ENCODE measurements at regions of chr6 and their contacts with region 1.

Region 1: DNA sequence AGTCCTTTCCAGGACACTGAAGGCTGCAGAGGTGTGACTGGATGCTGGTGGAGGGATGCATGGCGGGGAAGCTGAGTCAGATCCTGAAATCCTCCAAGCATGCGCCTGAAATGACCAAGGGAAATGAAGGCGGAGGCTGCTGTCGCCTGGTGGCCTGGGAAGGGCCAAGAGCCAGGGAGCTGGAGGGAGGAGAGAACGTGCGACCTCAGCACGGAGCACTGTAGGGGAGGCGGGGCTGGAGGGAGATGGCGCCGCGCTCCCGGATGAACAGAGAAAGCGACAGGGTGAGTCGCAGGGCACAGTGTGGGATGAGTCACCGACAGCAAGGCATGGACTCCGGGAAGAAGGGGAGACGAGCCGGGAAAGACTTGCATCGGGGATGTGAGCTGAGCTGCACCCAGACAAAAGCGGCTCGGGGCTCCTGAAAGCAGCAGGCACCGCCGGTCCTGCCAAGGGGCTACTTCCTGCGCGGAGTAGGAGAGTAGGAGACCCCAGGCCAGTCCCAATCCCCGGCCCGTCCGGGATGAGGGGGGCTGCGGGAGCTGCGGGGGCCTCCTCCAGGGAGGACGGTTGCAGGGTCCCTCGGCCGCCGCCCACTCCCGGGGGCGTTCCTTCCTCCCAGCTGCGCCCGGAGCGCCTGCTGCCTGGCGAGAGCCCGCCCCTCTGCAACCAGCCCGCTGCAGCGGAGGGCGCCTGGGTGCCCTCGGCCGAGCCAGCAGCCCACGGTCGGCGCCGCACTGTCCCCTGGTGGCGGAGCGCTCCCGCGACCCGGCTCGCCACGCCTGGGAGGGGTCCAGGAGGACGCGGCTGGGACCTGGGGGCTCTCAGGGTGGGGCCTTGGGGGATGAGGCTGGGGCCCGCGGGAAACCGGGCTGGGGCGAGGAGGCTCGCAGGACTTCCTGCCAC is 11.0 kb upstream of the NQO2 start:
- DNase-seq: peak; percentile 76 to 78 (median 77)
- H3K4me3 ChIP-seq: peak overlapping the region; percentile 52 to 66
- H3K4me3 Mint-ChIP-seq: peak overlapping the region; percentile 92 to 98 (median 98)
- H3K27ac ChIP-seq: peak overlapping the region; percentile 92
- H3K27ac Mint-ChIP-seq: peak overlapping the region; percentile 99 to 100 (median 100)
- H3K4me1 ChIP-seq: peaks cover 26% of the 10 kb centered on the region
- H3K4me1 Mint-ChIP-seq: peaks cover 19 to 37% (median 27%) of the 10 kb centered on the region in 4 donors
- H3K27me3 ChIP-seq: no peaks in the 10 kb centered on the region
- H3K27me3 Mint-ChIP-seq: no peaks in the 10 kb centered on the region

Region 2: GRCh38 chr6:2791124-2791974 is 197.3 kb before region 1 on chr6:
- CTCF ChIA-PET with region 1: interaction called, 11 read pairs
- POLR2A ChIA-PET with region 1: interaction called, 4 read pairs
- intact Hi-C with region 1: loop called (anchors 1 kb)
- DNase-seq: peak; percentile 41 to 57 (median 53)
- H3K4me3 ChIP-seq: no peak overlapping the region
- H3K4me3 Mint-ChIP-seq: peak overlapping the region in 6 of 8 donors; percentile 17 to 61 (median 40)
- H3K27ac ChIP-seq: no peak overlapping the region
- H3K27ac Mint-ChIP-seq: peak overlapping the region; percentile 36 to 83 (median 68)
- H3K4me1 ChIP-seq: peaks cover 26% of the 10 kb centered on the region
- H3K4me1 Mint-ChIP-seq: peaks cover 22 to 35% (median 26%) of the 10 kb centered on the region in 4 donors
- H3K27me3 ChIP-seq: no peaks in the 10 kb centered on the region
- H3K27me3 Mint-ChIP-seq: no peaks in the 10 kb centered on the region

Region 3: GRCh38 chr6:2900821-2901644 is 87.6 kb before region 1 on chr6:
- CTCF ChIA-PET with region 1: interaction called, 4 read pairs
- POLR2A ChIA-PET with region 1: interaction called, 22 read pairs
- intact Hi-C with region 1: loop called (anchors 2 kb)
- DNase-seq: peak in 1 of 5 donors; percentile 22
- H3K4me3 ChIP-seq: peak overlapping the region; percentile 42 to 92
- H3K4me3 Mint-ChIP-seq: peak overlapping the region; percentile 99 to 100 (median 99)
- H3K27ac ChIP-seq: peak overlapping the region; percentile 82
- H3K27ac Mint-ChIP-seq: peak overlapping the region; percentile 91 to 99 (median 98)
- H3K4me1 ChIP-seq: peaks cover 57% of the 10 kb centered on the region
- H3K4me1 Mint-ChIP-seq: peaks cover 44 to 66% (median 54%) of the 10 kb centered on the region in 4 donors
- H3K27me3 ChIP-seq: no peaks in the 10 kb centered on the region
- H3K27me3 Mint-ChIP-seq: no peaks in the 10 kb centered on the region

Region 4: GRCh38 chr6:2952557-2953095 is 36.1 kb before region 1 on chr6:
- CTCF ChIA-PET with region 1: interaction called, 81 read pairs
- POLR2A ChIA-PET with region 1: interaction called, 25 read pairs
- intact Hi-C with region 1: loop called (anchors 1 kb)
- DNase-seq: peak; percentile 14 to 43 (median 32)
- H3K4me3 ChIP-seq: no peak overlapping the region
- H3K4me3 Mint-ChIP-seq: peak overlapping the region in 1 of 8 donors; percentile 80
- H3K27ac ChIP-seq: no peak overlapping the region
- H3K27ac Mint-ChIP-seq: peak overlapping the region in 4 of 7 donors; percentile 19 to 90 (median 46)
- H3K4me1 ChIP-seq: peaks cover 3% of the 10 kb centered on the region
- H3K4me1 Mint-ChIP-seq: peaks cover 0 to 7% (median 0%) of the 10 kb centered on the region in 4 donors
- H3K27me3 ChIP-seq: no peaks in the 10 kb centered on the region
- H3K27me3 Mint-ChIP-seq: no peaks in the 10 kb centered on the region

Region 5: DNA sequence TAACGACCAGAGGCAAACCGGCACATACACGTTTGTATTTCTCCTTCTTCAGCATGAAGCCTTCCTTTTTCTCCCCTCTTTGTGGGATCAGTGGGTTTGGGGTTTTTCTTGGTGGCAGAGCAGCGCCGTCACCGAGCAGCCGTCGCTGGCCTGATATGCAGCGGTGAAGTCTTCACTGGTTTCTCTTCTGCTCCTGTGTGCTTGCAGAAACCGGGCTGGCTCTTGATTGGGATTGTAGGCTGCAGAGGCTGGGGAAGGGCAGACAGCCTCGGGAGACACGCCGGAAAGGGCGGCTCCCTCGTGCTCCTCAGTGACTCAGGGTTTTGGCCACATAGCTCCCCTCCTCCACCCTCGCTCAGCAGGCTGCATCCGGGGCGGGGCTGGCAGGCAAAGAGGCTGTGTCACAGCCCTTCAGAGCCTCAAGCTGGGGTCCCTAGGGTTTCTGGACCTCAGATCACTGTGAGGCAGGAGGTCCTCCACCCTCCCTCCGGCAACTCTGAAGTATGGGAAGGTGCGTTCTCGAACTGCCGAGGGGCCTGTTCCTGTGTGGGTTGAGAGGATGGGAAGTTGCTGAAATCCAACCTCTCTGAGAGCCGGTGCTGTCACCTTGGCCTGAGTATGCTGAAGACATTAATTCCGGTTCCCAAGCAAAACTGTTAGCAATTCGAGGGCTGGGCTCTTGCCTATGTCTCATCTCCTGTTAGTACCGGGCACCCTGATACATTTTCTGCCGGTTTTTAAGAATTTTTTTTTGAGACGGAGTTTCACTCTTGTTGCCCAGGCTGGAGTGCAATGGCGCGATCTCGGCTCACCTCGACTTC is 35.2 kb after region 1 on chr6:
- CTCF ChIA-PET with region 1: interaction called, 6 read pairs
- POLR2A ChIA-PET with region 1: interaction called, 37 read pairs
- intact Hi-C with region 1: no loop called
- DNase-seq: peak; percentile 73 to 91 (median 78)
- H3K4me3 ChIP-seq: peak overlapping the region; percentile 67 to 72
- H3K4me3 Mint-ChIP-seq: peak overlapping the region; percentile 87 to 97 (median 92)
- H3K27ac ChIP-seq: peak overlapping the region; percentile 61
- H3K27ac Mint-ChIP-seq: peak overlapping the region; percentile 91 to 97 (median 92)
- H3K4me1 ChIP-seq: peaks cover 70% of the 10 kb centered on the region
- H3K4me1 Mint-ChIP-seq: peaks cover 34 to 69% (median 54%) of the 10 kb centered on the region in 4 donors
- H3K27me3 ChIP-seq: no peaks in the 10 kb centered on the region
- H3K27me3 Mint-ChIP-seq: no peaks in the 10 kb centered on the region

Region 6: GRCh38 chr6:3118353-3119039 is 129.8 kb after region 1 on chr6 and contains the start of gene BPHL:
- CTCF ChIA-PET with region 1: no interaction called
- POLR2A ChIA-PET with region 1: interaction called, 6 read pairs
- intact Hi-C with region 1: loop called (anchors 1 kb)
- DNase-seq: peak; percentile 98 to 100 (median 99)
- H3K4me3 ChIP-seq: peak within 1 kb of the TSS; percentile 76 to 94
- H3K4me3 Mint-ChIP-seq: peak within 1 kb of the TSS; percentile 75 to 96 (median 91)
- H3K27ac ChIP-seq: peak within 1 kb of the TSS; percentile 87
- H3K27ac Mint-ChIP-seq: peak within 1 kb of the TSS; percentile 93 to 97 (median 96)
- H3K4me1 ChIP-seq: peaks cover 14% of the 10 kb centered on the region
- H3K4me1 Mint-ChIP-seq: peaks cover 7 to 20% (median 14%) of the 10 kb centered on the region in 4 donors
- H3K27me3 ChIP-seq: no peaks in the 10 kb centered on the region
- H3K27me3 Mint-ChIP-seq: no peaks in the 10 kb centered on the region
- total RNA-seq, gene BPHL: 11.9 to 13.7 TPM

Region 7: GRCh38 chr6:3324262-3324942 is 335.7 kb after region 1 on chr6:
- CTCF ChIA-PET with region 1: no interaction called
- POLR2A ChIA-PET with region 1: no interaction called
- intact Hi-C with region 1: no loop called
- DNase-seq: no peak
- H3K4me3 ChIP-seq: no peak overlapping the region
- H3K4me3 Mint-ChIP-seq: no peak overlapping the region
- H3K27ac ChIP-seq: no peak overlapping the region
- H3K27ac Mint-ChIP-seq: no peak overlapping the region
- H3K4me1 ChIP-seq: no peaks in the 10 kb centered on the region
- H3K4me1 Mint-ChIP-seq: peaks cover 0 to 8% (median 2%) of the 10 kb centered on the region in 4 donors
- H3K27me3 ChIP-seq: no peaks in the 10 kb centered on the region
- H3K27me3 Mint-ChIP-seq: no peaks in the 10 kb centered on the region

Region 8: GRCh38 chr6:4018172-4018905 is 1029.7 kb after region 1 on chr6:
- CTCF ChIA-PET with region 1: no interaction called
- POLR2A ChIA-PET with region 1: interaction called, 14 read pairs
- intact Hi-C with region 1: no loop called
- DNase-seq: peak; percentile 94 to 96 (median 95)
- H3K4me3 ChIP-seq: peak overlapping the region; percentile 57 to 64
- H3K4me3 Mint-ChIP-seq: peak overlapping the region; percentile 89 to 99 (median 96)
- H3K27ac ChIP-seq: peak overlapping the region; percentile 91
- H3K27ac Mint-ChIP-seq: peak overlapping the region; percentile 90 to 98 (median 96)
- H3K4me1 ChIP-seq: peaks cover 71% of the 10 kb centered on the region
- H3K4me1 Mint-ChIP-seq: peaks cover 49 to 88% (median 66%) of the 10 kb centered on the region in 4 donors
- H3K27me3 ChIP-seq: no peaks in the 10 kb centered on the region
- H3K27me3 Mint-ChIP-seq: no peaks in the 10 kb centered on the region

Measured in CD4-positive, alpha-beta memory T cell (primary cell).